PC-9 (cell line): ENCODE measurements at regions of chr12 and their contacts with region 1.

Region 1: GRCh38 chr12:114636723-114637483 is 47.1 kb downstream of the TBX3 start:
- DNase-seq: peak in 1 of 2 experiments; percentile 41
- H3K4me3 ChIP-seq: no peak overlapping the region
- H3K27ac ChIP-seq: no peak overlapping the region
- H3K4me1 ChIP-seq: no peaks in the 10 kb centered on the region
- H3K27me3 ChIP-seq: peaks cover 17% of the 10 kb centered on the region; the same call in 1 of the 2 replicates
- CTCF ChIP-seq: peak; percentile 38; the same call in 1 of the 2 replicates

Region 2: DNA sequence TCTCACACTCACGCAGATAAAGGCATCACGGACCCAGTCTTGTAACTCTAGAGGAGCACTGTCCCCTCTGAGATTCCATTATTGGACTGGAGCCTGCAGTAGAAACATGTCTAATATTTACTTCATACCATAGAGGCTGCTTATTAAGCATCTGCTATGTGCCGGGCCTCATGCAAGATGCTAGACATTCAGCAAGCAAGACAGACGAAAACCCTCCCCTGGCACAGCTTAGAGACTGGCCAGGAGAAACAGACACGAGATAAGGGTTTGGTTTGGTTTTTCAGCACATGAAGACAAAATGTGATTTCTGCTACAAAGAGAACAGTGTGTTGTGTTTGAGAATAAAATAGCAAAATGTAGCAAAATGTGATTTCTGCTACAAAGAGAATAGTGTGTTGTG is 921.4 kb after region 1 on chr12:
- CTCF ChIA-PET with region 1: no interaction called
- POLR2A ChIA-PET with region 1: interaction called, 23 read pairs
- intact Hi-C with region 1: no loop called
- DNase-seq: no peak
- H3K4me3 ChIP-seq: no peak overlapping the region
- H3K27ac ChIP-seq: no peak overlapping the region
- H3K4me1 ChIP-seq: no peaks in the 10 kb centered on the region
- H3K27me3 ChIP-seq: peaks cover 25% of the 10 kb centered on the region; the same call in 1 of the 2 replicates
- CTCF ChIP-seq: no peak